AG04449 (cell line): ENCODE measurements at regions of chr10 and their contacts with region 1.

Region 1: GRCh38 chr10:102835007-102835482 is 2.2 kb downstream of the CYP17A1 start:
- DNase-seq: no peak
- H3K4me3 ChIP-seq: no peak overlapping the region
- CTCF ChIP-seq: peak; percentile 85

Region 2: GRCh38 chr10:102729029-102730026 is 105.7 kb before region 1 on chr10:
- CTCF ChIA-PET with region 1: interaction called, 37 read pairs
- POLR2A ChIA-PET with region 1: interaction called, 3 read pairs
- DNase-seq: no peak
- H3K4me3 ChIP-seq: no peak overlapping the region
- CTCF ChIP-seq: peak; percentile 95

Region 3: GRCh38 chr10:102815790-102816549 is 19.1 kb before region 1 on chr10:
- CTCF ChIA-PET with region 1: interaction called, 18 read pairs
- POLR2A ChIA-PET with region 1: no interaction called
- DNase-seq: peak; percentile 51
- H3K4me3 ChIP-seq: no peak overlapping the region
- CTCF ChIP-seq: no peak

Region 4: DNA sequence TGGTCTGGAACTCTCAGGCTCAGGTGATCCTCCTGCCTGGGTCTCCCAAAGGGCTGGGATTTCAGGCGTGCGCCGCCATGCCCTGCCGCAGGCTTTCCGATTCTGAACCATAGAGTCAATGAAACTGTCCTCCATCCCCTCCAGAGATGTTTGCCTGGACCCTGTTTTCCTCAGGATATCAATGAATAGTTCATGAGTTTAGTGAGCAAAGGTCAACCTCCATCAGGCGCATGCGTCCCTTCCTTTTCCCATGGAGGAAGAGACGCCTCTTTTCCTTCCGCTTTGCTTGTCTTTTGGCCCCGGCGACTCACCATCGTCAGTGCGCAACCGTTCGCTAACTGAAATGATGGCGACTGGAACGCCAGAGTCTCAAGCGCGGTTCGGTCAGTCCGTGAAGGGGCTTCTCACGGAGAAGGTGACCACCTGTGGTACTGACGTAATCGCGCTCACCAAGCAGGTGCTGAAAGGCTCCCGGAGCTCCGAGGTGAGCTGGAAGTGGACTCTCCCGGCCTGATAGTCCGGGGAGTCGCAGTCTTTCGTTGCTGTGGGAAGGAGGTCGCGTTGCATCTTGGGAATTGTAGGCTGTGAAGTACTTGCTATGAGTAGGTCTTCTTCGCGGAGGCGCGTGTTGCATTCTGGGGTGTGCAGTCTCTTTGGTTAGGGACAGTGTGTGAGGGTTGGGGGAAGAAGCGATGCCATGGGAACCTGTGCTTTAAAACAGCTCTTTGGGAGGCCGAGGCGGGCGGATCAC is 19.1 kb after region 1 on chr10 and contains the start of gene BORCS7:
- CTCF ChIA-PET with region 1: interaction called, 57 read pairs
- POLR2A ChIA-PET with region 1: no interaction called
- DNase-seq: peak; percentile 85
- H3K4me3 ChIP-seq: peak within 1 kb of the TSS; percentile 98
- CTCF ChIP-seq: no peak

Region 5: DNA sequence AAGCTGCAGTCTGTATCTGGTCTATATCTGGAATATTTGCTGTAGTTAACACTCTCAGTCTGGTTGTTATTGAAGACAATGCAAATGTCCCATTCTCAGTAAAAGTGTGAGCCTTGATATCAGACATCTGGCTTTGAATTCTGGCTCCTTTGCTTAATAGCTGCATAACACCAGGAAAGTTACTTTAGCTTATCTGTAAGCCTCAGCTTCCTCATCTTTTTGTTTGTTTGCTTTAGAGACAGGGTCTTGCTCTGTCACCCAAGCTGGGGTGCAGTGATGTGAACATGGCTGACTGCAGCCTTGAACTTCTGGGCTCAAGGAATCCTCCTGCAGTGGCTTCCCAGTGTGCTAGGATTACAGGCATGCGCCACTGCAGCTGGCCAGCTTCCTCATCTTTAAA is 124.3 kb after region 1 on chr10:
- CTCF ChIA-PET with region 1: no interaction called
- POLR2A ChIA-PET with region 1: no interaction called
- DNase-seq: no peak
- H3K4me3 ChIP-seq: no peak overlapping the region
- CTCF ChIP-seq: no peak

Region 6: DNA sequence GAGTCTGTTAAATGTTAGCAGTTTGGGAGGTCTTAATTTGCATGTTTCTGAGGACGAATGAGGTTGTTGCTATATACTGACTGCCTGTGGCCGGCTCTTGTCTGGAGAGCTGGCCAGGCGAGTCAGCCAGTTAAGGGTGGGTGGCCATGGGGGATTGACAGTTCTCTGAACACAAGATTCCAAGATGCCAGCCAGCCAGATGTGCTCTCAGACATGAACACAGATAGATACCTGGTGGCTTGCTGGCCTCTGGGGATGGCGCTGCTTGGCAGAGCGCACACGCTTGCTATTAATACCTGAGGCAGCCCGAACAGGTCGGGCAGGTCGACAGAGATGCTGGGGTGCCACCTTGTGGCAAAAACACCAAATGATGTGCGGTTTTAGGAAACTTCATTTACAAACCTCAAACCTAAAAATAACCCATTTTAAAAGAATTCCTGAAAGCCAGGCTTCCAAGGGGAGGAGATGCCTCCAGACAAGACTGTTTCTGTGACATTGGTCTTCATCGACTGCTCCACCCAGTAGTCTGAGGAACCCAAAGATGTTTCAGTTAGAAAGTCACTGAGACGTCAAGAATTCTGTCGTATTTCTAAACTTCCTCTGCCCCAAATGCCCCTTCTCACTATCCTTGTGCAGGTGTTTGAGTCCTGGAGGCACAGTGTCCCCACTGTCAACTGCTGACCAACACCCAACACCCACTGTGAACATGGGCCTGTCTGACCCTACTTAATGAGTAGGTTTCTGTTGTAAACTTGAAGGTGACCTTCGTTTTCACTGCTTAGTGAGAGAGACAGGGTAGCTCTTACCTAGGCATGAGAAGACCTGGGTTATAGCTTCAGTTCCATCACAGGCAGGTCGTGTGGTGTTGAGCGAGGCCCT is 234.6 kb after region 1 on chr10:
- CTCF ChIA-PET with region 1: interaction called, 24 read pairs
- POLR2A ChIA-PET with region 1: no interaction called
- DNase-seq: no peak
- H3K4me3 ChIP-seq: no peak overlapping the region
- CTCF ChIP-seq: peak; percentile 54